A673 (cell line): ENCODE measurements at regions of chr13 and their contacts with region 1.

Region 1: GRCh38 chr13:45340926-45341750 is at the start of gene TPT1:
- DNase-seq: peak; percentile 99
- H3K4me3 ChIP-seq: peak within 1 kb of the TSS; percentile 99
- H3K27ac ChIP-seq: peak within 1 kb of the TSS; percentile 100
- H3K4me1 ChIP-seq: peaks cover 35% of the 10 kb centered on the region
- H3K27me3 ChIP-seq: no peaks in the 10 kb centered on the region
- CTCF ChIP-seq: no peak
- total RNA-seq, gene TPT1: 1,957 and 1,963 TPM in 2 replicates

Region 2: GRCh38 chr13:45231722-45232121 is 109.4 kb before region 1 on chr13:
- CTCF ChIA-PET with region 1: no interaction called
- POLR2A ChIA-PET with region 1: interaction called, 10 read pairs
- intact Hi-C with region 1: no loop called
- DNase-seq: no peak
- H3K4me3 ChIP-seq: no peak overlapping the region
- H3K27ac ChIP-seq: no peak overlapping the region
- H3K4me1 ChIP-seq: peaks cover 23% of the 10 kb centered on the region
- H3K27me3 ChIP-seq: no peaks in the 10 kb centered on the region
- CTCF ChIP-seq: no peak

Region 3: DNA sequence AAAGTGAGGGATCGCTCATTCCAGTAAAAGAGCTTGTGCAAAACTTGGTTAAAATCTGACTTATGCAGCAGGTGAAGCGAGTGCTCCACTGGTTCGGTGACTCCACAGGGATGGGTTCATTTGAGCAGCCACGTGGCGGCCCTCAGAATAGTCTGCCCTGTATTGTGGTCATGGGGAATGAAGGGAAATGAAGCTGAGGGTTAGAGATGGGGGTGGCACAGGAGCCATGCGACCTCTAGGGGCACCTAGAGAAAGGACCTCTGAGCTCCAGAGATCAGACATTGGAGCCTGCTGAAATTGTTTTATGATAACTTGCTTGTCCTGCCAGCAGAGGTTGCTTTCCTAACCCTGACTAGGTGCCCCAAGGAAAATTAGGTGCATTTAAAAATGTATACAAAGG is 387.6 kb after region 1 on chr13:
- CTCF ChIA-PET with region 1: no interaction called
- POLR2A ChIA-PET with region 1: no interaction called
- intact Hi-C with region 1: no loop called
- DNase-seq: no peak
- H3K4me3 ChIP-seq: no peak overlapping the region
- H3K27ac ChIP-seq: no peak overlapping the region
- H3K4me1 ChIP-seq: peaks cover 4% of the 10 kb centered on the region
- H3K27me3 ChIP-seq: no peaks in the 10 kb centered on the region
- CTCF ChIP-seq: no peak